ENCODE measurements at regions of chr1 and their contacts with region 1.

Region 1: GRCh38 chr1:40143891-40144575 is 17.2 kb upstream of the RLF start:
- DNase-seq: peak; percentile 55
- H3K4me3 Mint-ChIP-seq: no peak overlapping the region
- H3K27ac Mint-ChIP-seq: no peak overlapping the region
- H3K4me1 Mint-ChIP-seq: peaks cover 8% of the 10 kb centered on the region
- H3K27me3 Mint-ChIP-seq: peaks cover 26% of the 10 kb centered on the region

Region 2: DNA sequence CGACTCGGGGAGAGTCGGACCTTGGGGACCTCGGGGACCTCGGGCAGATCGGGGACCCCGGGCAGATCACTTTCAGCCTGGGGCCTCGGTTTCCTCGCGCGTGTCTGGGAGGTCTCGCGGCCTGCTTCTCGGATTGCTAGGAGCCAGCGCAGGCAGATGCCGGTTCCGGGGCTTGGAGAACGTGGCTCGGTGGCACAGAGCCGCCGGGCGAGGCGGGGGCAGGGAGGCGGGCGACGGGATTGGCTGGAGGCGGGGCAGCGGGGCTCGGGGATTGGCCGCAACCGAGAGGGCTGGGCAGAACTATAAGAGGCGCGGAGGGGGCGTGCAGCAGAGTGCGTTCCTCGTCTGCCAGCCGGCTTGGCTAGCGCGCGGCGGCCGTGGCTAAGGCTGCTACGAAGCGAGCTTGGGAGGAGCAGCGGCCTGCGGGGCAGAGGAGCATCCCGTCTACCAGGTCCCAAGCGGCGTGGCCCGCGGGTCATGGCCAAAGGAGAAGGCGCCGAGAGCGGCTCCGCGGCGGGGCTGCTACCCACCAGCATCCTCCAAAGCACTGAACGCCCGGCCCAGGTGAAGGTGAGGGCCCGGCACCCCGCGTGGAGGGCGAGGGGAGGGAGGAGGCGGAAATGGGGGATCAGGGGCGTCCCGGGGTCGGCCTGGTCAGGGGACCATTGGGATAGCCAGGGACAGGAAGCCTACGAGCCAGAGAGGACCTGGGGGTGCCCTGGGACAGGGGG is 189.1 kb before region 1 on chr1 and contains the start of gene MFSD2A:
- CTCF ChIA-PET with region 1: no interaction called
- POLR2A ChIA-PET with region 1: no interaction called
- intact Hi-C with region 1: no loop called
- DNase-seq: peak; percentile 94
- H3K4me3 Mint-ChIP-seq: peak within 1 kb of the TSS; percentile 84
- H3K27ac Mint-ChIP-seq: peak within 1 kb of the TSS; percentile 75
- H3K4me1 Mint-ChIP-seq: peaks cover 30% of the 10 kb centered on the region
- H3K27me3 Mint-ChIP-seq: no peaks in the 10 kb centered on the region
- total RNA-seq, gene MFSD2A: 6.0 to 7.5 TPM

Region 3: DNA sequence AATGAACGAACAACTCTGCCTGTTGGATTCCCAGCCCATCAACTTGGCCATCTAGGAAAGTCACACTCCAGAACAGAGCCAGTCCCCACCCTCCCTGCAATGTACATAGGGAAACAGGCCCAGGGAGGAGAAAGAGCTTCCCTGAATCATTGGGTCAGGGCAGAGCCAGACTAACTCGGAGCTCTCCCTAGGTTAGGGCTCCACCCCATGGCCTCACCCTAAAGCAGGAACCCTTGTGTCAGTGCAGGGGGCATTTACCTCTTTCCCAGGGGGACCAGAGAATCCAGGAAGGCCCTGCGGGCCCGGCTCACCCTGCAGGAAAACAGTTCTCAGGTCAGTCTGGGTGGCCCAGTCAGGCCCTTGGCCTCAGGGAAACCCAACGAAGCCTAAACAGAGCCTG is 161.4 kb after region 1 on chr1:
- CTCF ChIA-PET with region 1: interaction called, 11 read pairs
- POLR2A ChIA-PET with region 1: no interaction called
- intact Hi-C with region 1: no loop called
- DNase-seq: peak; percentile 45
- H3K4me3 Mint-ChIP-seq: no peak overlapping the region
- H3K27ac Mint-ChIP-seq: no peak overlapping the region
- H3K4me1 Mint-ChIP-seq: no peaks in the 10 kb centered on the region
- H3K27me3 Mint-ChIP-seq: no peaks in the 10 kb centered on the region

Region 4: GRCh38 chr1:40373338-40374283 is 229.6 kb after region 1 on chr1 and contains the start of gene SMAP2:
- CTCF ChIA-PET with region 1: interaction called, 11 read pairs
- POLR2A ChIA-PET with region 1: interaction called, 3 read pairs
- intact Hi-C with region 1: no loop called
- DNase-seq: peak; percentile 98
- H3K4me3 Mint-ChIP-seq: peak within 1 kb of the TSS; percentile 97
- H3K27ac Mint-ChIP-seq: peak within 1 kb of the TSS; percentile 99
- H3K4me1 Mint-ChIP-seq: peaks cover 44% of the 10 kb centered on the region
- H3K27me3 Mint-ChIP-seq: peaks cover 1% of the 10 kb centered on the region
- total RNA-seq, gene SMAP2: 250 to 254 TPM

Region 5: DNA sequence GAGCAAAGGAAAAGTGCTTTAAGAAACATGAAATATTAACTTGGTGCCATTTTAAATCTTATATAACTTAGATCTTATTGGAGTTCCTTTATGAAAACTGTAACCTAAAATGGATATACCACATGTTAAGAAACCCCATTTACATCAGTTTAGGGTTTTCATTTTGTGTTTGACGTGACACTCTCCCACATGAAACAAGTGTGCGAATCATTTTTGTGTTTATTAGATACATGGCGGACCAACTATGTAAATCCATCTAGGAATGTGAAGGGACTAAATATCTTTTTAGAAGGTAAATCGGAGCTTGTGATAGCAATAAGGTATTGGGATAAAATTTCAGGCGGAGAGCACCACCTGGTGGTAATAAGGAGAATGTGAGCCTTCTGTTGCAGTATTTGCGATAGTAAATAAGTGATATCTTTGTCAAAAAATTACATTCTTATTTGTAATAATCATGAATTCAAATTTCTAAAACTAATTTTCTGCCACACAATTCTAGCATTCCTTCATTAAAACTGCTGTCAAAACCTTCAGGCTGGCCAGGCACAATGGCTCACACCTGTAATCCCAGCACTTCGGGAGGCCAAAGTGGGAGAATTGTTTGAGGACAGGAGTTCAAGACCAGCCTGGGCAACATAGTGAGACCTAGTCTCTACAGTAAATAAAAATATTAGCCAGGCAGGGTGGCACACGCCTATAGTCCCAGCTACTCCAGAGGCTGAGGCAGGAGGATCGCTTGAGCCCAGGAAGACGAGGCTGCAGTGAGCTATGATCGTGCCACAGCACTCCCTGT is 260.8 kb after region 1 on chr1:
- CTCF ChIA-PET with region 1: interaction called, 25 read pairs
- POLR2A ChIA-PET with region 1: no interaction called
- intact Hi-C with region 1: loop called (anchors 2 kb)
- DNase-seq: peak; percentile 49
- H3K4me3 Mint-ChIP-seq: peak overlapping the region; percentile 52
- H3K27ac Mint-ChIP-seq: peak overlapping the region; percentile 88
- H3K4me1 Mint-ChIP-seq: peaks cover 72% of the 10 kb centered on the region
- H3K27me3 Mint-ChIP-seq: no peaks in the 10 kb centered on the region

Region 6: GRCh38 chr1:40668769-40669525 is 524.9 kb after region 1 on chr1:
- CTCF ChIA-PET with region 1: interaction called, 6 read pairs
- POLR2A ChIA-PET with region 1: no interaction called
- intact Hi-C with region 1: loop called (anchors 5 kb)
- DNase-seq: peak; percentile 91
- H3K4me3 Mint-ChIP-seq: peak overlapping the region; percentile 41
- H3K27ac Mint-ChIP-seq: no peak overlapping the region
- H3K4me1 Mint-ChIP-seq: peaks cover 7% of the 10 kb centered on the region
- H3K27me3 Mint-ChIP-seq: no peaks in the 10 kb centered on the region

Measured in activated CD4-positive, alpha-beta memory T cell treated with anti-CD3 and anti-CD28 coated beads for 36 hours (primary cell).